IMR-90 (cell line): ENCODE measurements at regions of chr4 and their contacts with region 1.

Region 1: DNA sequence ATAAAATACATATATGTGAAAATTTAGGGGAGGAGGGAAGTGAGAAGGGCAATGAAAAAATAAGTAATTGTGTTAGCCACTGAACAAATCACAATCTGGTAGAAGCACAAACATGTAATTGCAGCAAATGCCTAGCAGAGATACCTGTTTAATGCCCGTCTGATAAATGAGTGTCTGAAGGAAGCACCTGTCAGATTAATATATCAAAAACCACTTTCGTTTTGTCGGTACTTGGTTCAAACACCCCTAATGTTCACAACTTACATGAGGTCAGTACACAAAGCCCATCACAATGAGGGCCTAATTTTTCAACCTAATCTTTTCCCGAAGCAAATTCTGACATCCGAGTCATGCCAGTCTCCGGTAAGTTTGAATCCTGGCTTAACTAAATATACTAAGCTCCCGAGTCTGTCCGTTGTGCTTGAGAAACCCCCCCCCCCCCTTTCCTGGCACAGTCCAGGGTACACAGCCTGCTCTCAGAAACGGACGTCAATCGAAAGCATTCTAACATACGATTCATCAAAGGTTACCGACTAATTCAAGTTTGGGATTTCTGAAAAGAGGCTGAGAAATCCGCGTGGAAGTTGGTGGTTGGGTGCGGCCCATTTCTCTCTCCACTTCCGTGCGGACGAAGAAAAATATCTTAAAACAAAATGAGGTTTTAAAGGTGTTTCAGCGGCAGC is 758 bp downstream of the SDAD1 start:
- DNase-seq: peak; percentile 15
- ATAC-seq: no peak
- H3K4me3 ChIP-seq: peak overlapping the region; percentile 86
- H3K27ac ChIP-seq: peak overlapping the region; percentile 84
- H3K4me1 ChIP-seq: peaks cover 2% of the 10 kb centered on the region
- H3K27me3 ChIP-seq: no peaks in the 10 kb centered on the region
- CTCF ChIP-seq: no peak
- POLR2A ChIP-seq: no peak
- RAD21 ChIP-seq: no peak

Region 2: DNA sequence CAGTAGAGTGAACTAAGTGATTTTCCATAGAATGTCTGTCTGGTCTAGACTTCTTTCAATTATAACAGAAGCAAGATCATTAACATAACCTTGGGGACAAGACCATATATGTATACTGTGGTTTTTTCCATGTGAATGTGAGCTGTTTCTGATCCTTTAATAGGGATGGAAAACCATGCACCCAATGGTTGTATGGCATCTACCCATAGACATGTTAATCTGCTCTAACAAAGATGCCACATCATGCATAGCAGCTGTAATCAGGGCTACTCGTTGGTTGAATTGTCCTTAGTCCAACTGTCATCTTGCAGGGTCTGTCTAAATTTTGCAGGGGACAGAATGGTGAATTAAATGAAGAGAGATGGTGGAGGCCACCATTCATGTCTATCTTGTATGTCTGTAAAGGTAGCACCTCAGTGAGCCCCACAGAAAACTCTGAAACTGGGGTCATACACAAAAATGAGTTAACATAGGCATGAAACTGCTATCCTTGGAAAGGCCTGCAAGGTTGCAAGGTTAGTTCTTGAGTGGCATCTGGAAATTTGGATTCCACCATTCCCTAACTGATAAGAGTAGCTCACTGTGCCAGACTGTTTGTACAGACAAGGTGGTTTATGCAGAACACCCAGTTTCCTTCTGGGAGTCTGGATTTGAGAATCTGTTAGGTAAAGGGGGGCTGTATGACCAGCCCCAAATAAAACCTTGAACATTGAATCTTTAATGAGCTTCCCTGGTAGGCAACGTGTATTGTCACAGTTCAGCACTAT is 459.2 kb before region 1 on chr4:
- CTCF ChIA-PET with region 1: no interaction called
- POLR2A ChIA-PET with region 1: no interaction called
- dilution Hi-C with region 1: no loop called
- in situ Hi-C with region 1: no loop called
- intact Hi-C with region 1: no loop called
- DNase-seq: no peak
- ATAC-seq: no peak
- H3K4me3 ChIP-seq: no peak overlapping the region
- H3K27ac ChIP-seq: no peak overlapping the region
- H3K4me1 ChIP-seq: no peaks in the 10 kb centered on the region
- H3K27me3 ChIP-seq: no peaks in the 10 kb centered on the region
- CTCF ChIP-seq: no peak
- POLR2A ChIP-seq: no peak
- RAD21 ChIP-seq: no peak

Region 3: GRCh38 chr4:75736862-75737261 is 253.1 kb before region 1 on chr4:
- CTCF ChIA-PET with region 1: no interaction called
- POLR2A ChIA-PET with region 1: no interaction called
- dilution Hi-C with region 1: no loop called
- in situ Hi-C with region 1: no loop called
- intact Hi-C with region 1: no loop called
- DNase-seq: peak; percentile 20
- ATAC-seq: no peak
- H3K4me3 ChIP-seq: no peak overlapping the region
- H3K27ac ChIP-seq: no peak overlapping the region
- H3K4me1 ChIP-seq: peaks cover 2% of the 10 kb centered on the region; the same call in 1 of the 2 replicates
- H3K27me3 ChIP-seq: no peaks in the 10 kb centered on the region
- CTCF ChIP-seq: no peak
- POLR2A ChIP-seq: no peak
- RAD21 ChIP-seq: no peak

Region 4: GRCh38 chr4:76148142-76148865 is 158.3 kb after region 1 on chr4 and contains the start of gene NUP54:
- CTCF ChIA-PET with region 1: no interaction called
- POLR2A ChIA-PET with region 1: no interaction called
- dilution Hi-C with region 1: no loop called
- in situ Hi-C with region 1: no loop called
- intact Hi-C with region 1: loop called (anchors 1 kb)
- DNase-seq: peak; percentile 95
- ATAC-seq: peak; percentile 98
- H3K4me3 ChIP-seq: peak within 1 kb of the TSS; percentile 64
- H3K27ac ChIP-seq: peak within 1 kb of the TSS; percentile 79
- H3K4me1 ChIP-seq: no peaks in the 10 kb centered on the region; the same call in 1 of the 2 replicates
- H3K27me3 ChIP-seq: no peaks in the 10 kb centered on the region
- CTCF ChIP-seq: no peak
- POLR2A ChIP-seq: peak; percentile 87
- RAD21 ChIP-seq: no peak
- total RNA-seq, gene NUP54: 44.4 and 62.8 TPM in 2 replicates